Psoas muscle (tissue), 8 donors: ENCODE measurements at regions of chrX and their contacts with region 1.

Region 1: GRCh38 chrX:139559383-139560042 is 29.0 kb downstream of the F9 start:
- DNase-seq: no peak
- ATAC-seq: peak; percentile 75 to 83 (median 80)
- H3K4me3 ChIP-seq: no peak overlapping the region
- H3K27ac ChIP-seq: no peak overlapping the region
- H3K4me1 ChIP-seq: no peaks in the 10 kb centered on the region
- H3K27me3 ChIP-seq: peaks cover 0 to 6% (median 0%) of the 10 kb centered on the region in 3 donors
- CTCF ChIP-seq: peak; percentile 58

Region 2: GRCh38 chrX:138756234-138756633 is 803.3 kb before region 1 on chrX:
- intact Hi-C with region 1: loop called in 1 of 2 experiments (anchors 5 kb)
- DNase-seq: peak; percentile 51 to 64
- ATAC-seq: peak; percentile 85 to 91 (median 86)
- H3K4me3 ChIP-seq: no peak overlapping the region
- H3K27ac ChIP-seq: no peak overlapping the region
- H3K4me1 ChIP-seq: peaks cover 18% of the 10 kb centered on the region
- H3K27me3 ChIP-seq: no peaks in the 10 kb centered on the region
- CTCF ChIP-seq: peak; percentile 46

Region 3: GRCh38 chrX:138775517-138775916 is 784.0 kb before region 1 on chrX:
- intact Hi-C with region 1: loop called (anchors 5 kb)
- DNase-seq: no peak
- ATAC-seq: peak; percentile 47 to 77 (median 52)
- H3K4me3 ChIP-seq: no peak overlapping the region
- H3K27ac ChIP-seq: no peak overlapping the region
- H3K4me1 ChIP-seq: no peaks in the 10 kb centered on the region
- H3K27me3 ChIP-seq: no peaks in the 10 kb centered on the region
- CTCF ChIP-seq: peak; percentile 52

Region 4: GRCh38 chrX:139484591-139484990 is 74.9 kb before region 1 on chrX:
- intact Hi-C with region 1: no loop called
- DNase-seq: no peak
- ATAC-seq: no peak
- H3K4me3 ChIP-seq: no peak overlapping the region
- H3K27ac ChIP-seq: no peak overlapping the region
- H3K4me1 ChIP-seq: no peaks in the 10 kb centered on the region
- H3K27me3 ChIP-seq: no peaks in the 10 kb centered on the region
- CTCF ChIP-seq: no peak

Region 5: GRCh38 chrX:139600105-139600504 is 40.6 kb after region 1 on chrX:
- intact Hi-C with region 1: no loop called
- DNase-seq: no peak
- ATAC-seq: no peak
- H3K4me3 ChIP-seq: no peak overlapping the region
- H3K27ac ChIP-seq: no peak overlapping the region
- H3K4me1 ChIP-seq: no peaks in the 10 kb centered on the region
- H3K27me3 ChIP-seq: no peaks in the 10 kb centered on the region
- CTCF ChIP-seq: no peak